ENCODE measurements at regions of chr11 and their contacts with region 1.

Region 1: DNA sequence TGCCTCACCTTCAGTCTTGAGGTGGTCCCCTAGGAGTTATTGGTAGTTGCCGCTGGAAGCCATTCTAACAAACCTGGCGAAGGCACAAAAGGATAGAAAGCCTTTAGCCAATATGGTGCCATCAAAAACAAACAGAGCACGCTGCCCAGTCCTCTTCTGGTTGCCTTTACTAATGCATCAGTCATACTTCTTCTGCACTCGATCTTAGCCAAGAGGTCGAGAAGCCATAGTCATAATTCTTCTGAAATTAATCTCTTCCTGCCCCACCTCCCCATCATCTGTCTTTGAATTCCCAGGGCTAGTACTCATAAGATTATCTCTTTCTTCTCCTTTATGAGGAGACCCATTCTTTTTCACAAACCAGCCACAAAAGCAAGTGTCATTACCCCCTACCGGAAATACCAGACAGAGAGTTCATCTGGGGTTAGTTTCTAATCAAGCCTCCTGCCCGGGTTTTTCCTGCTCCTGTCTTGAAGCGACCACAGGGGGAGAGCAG is 21.4 kb upstream of the EHF start:
- DNase-seq: no peak
- ATAC-seq: no peak
- H3K4me3 ChIP-seq: no peak overlapping the region
- H3K27ac ChIP-seq: no peak overlapping the region
- H3K4me1 ChIP-seq: peaks cover 0 to 23% (median 17%) of the 10 kb centered on the region in 9 donors
- H3K27me3 ChIP-seq: no peaks in the 10 kb centered on the region
- CTCF ChIP-seq: no peak

Region 2: DNA sequence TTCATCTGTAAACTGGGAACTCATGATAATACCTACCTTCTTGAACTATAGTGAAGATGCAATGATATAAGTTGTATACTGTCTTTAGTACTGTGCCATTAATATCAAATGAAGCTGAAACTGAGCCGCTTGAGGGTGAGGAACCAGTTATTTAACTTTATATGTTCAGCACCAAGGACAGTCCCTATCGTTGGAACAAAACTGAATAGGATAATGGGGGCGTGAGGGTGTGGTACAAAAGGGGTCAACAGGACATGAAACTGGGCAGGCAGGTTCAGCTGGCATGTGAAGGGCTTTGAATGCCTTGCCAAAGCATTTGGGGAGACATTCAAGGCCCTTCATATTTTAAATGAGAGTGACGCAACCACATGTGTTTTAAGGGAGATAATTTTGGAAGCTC is 1011.4 kb before region 1 on chr11:
- intact Hi-C with region 1: no loop called
- DNase-seq: no peak
- ATAC-seq: no peak
- H3K4me3 ChIP-seq: no peak overlapping the region
- H3K27ac ChIP-seq: no peak overlapping the region
- H3K4me1 ChIP-seq: no peaks in the 10 kb centered on the region
- H3K27me3 ChIP-seq: peaks cover 0 to 15% (median 0%) of the 10 kb centered on the region in 7 donors
- CTCF ChIP-seq: no peak

Region 3: GRCh38 chr11:34653826-34654490 is 54.5 kb after region 1 on chr11:
- intact Hi-C with region 1: loop called in 1 of 10 experiments (anchors 10 kb)
- DNase-seq: no peak
- ATAC-seq: peak in 4 of 8 donors; percentile 47 to 65 (median 54)
- H3K4me3 ChIP-seq: no peak overlapping the region
- H3K27ac ChIP-seq: no peak overlapping the region
- H3K4me1 ChIP-seq: peaks cover 0 to 24% (median 0%) of the 10 kb centered on the region in 9 donors
- H3K27me3 ChIP-seq: no peaks in the 10 kb centered on the region
- CTCF ChIP-seq: peak in 1 of 9 donors; percentile 7